ENCODE measurements at regions of chr12 and their contacts with region 1.

Region 1: GRCh38 chr12:93378373-93379325 is 924 bp downstream of the NUDT4 start:
- DNase-seq: peak in 1 of 2 experiments; percentile 19
- H3K4me3 ChIP-seq: peak overlapping the region; percentile 86
- H3K27ac ChIP-seq: peak overlapping the region; percentile 42
- H3K4me1 ChIP-seq: peaks cover 28% of the 10 kb centered on the region
- H3K27me3 ChIP-seq: no peaks in the 10 kb centered on the region
- CTCF ChIP-seq: no peak

Region 2: DNA sequence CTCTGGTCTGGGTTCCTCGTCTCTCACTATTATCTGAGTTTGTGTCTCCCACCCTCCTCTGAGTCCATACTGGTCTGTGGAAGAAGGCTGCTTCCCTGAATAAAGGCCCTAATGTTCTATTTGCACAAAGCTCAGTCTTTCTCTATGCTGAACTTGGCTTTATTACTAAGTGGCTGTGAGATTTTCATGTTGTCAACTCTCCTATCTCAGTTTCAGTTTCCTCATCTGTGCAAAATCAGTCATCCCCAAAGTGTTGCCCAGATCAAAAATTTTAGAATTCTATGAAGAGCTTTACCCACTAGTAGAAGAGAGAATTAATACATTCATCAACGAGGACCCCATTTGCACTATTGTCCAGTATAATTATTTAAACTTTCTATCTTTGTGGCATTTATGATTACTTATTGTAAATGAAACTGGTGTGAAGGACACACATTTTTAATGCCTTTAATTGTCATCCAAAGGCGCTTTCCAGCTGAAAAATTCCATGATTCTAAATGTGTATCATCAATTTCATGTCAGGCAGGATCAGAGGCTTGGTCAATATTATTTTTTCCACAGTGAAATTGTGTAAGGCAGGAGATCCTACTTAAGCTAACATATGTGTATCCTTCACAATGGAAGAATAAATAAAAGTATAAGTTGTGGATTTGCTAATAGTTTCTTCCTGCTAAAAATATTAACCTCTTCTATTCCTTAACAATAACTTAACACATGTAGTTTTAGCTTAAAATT is 370.4 kb before region 1 on chr12:
- CTCF ChIA-PET with region 1: no interaction called
- POLR2A ChIA-PET with region 1: no interaction called
- intact Hi-C with region 1: no loop called
- DNase-seq: no peak
- H3K4me3 ChIP-seq: no peak overlapping the region
- H3K27ac ChIP-seq: no peak overlapping the region
- H3K4me1 ChIP-seq: no peaks in the 10 kb centered on the region
- H3K27me3 ChIP-seq: no peaks in the 10 kb centered on the region
- CTCF ChIP-seq: no peak

Region 3: DNA sequence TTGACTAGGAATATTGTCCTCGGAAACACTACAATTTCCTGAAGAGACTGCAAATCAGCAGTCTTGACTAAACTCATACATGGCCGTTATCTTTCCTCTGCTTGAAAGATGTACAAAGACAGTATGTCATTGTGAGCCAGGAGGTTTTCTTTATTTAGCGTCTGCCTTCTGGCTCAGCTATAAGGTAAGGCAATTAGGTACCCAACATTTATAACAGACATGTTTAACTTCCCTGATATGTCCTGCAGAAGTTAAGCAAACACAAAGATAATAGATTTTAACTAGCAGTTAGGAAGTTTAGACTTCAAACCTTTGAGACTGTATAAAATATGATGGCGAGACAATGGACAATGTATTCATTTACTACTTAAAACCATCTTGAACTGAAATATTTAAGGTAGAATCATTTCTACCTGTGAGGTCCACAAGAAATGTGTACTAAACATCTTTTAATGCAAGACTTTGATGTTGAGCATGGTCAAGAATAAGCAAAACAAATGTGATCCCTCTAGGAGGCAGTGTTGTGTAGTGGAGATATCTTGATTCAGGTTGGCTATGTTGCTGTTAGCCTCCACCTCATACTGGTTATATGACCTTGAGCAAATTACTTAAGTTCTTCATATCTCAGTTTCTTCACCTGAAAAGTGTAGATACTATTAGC is 353.4 kb before region 1 on chr12:
- CTCF ChIA-PET with region 1: no interaction called
- POLR2A ChIA-PET with region 1: no interaction called
- intact Hi-C with region 1: loop called (anchors 1 kb)
- DNase-seq: no peak
- H3K4me3 ChIP-seq: no peak overlapping the region
- H3K27ac ChIP-seq: no peak overlapping the region
- H3K4me1 ChIP-seq: peaks cover 28% of the 10 kb centered on the region
- H3K27me3 ChIP-seq: no peaks in the 10 kb centered on the region
- CTCF ChIP-seq: peak; percentile 53; the same call in 1 of the 2 replicates

Region 4: DNA sequence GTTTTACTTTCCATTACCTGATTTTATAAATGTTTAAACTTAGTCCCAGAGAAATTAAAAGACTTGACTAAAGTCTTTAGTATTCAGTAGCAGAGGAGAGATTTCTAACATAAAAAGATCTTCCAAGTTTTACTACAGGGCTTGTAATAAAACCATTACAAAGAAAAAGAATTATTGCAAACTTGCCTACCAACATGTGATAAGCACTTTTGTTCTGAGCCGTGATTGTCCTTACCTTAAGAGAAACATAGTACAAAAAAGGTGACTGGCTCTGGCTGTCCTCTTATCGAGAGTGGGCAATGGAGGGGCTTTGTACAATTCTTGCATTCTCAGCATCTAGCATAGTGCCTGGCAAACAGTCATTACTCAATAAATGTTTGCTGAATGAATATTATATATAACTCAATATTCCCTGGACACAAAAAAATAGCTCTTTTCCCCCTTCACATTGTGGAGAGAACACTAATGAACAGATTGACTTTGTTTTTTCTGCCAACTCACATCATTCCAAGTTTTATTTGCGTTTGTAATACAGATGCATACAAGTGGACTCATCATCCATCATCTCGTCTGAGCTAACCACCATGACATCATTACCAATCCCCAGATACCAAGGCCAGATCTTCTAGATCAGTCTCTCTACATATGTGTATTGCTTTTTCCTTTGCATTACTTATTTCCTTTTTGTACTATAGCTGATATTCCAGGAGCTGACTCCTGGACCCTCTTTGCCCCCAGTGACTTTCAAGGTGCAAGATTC is 256.7 kb before region 1 on chr12:
- CTCF ChIA-PET with region 1: interaction called, 10 read pairs
- POLR2A ChIA-PET with region 1: no interaction called
- intact Hi-C with region 1: no loop called
- DNase-seq: peak in 1 of 2 experiments; percentile 42
- H3K4me3 ChIP-seq: no peak overlapping the region
- H3K27ac ChIP-seq: peak overlapping the region; percentile 75
- H3K4me1 ChIP-seq: peaks cover 18% of the 10 kb centered on the region
- H3K27me3 ChIP-seq: no peaks in the 10 kb centered on the region
- CTCF ChIP-seq: no peak

Region 5: DNA sequence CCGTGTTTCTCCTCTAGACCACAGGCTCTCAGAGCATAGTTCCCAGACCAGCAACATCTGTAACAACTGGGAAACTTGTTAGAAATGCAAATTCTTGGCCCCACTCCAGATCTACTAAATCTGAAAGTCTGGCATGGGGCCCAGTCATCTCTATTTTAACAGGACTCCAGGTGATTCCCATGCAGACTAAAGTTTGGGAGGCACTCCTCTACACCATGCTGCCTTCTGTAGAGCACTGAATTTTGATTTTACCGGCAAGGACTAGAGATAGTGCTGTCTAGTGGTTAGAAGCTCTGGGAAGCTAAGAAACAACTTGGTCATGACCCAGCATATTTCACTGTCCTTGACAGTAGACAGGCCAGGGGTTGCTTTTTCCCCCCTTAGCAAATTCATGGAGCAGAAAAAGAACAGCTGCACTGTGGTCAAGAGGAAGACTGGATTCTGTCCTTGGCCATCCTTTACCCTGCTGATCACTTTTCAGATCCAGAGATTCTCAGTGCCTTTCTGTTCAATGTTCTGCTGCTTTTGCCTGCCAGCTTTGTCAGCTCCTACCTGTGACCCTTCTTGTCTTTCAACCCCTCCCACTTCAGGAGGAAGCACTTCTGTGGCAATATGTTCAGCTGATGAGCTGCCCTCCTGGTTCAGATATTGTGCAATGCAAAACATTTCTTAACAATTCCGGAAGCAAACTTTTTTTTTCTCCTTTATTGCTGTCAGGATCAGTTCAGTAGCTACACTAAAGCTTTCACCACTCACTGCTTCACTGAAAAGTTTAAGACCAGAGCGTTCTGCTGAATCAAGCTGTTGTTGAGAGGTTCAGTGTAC is 134.7 kb before region 1 on chr12:
- CTCF ChIA-PET with region 1: no interaction called
- POLR2A ChIA-PET with region 1: no interaction called
- intact Hi-C with region 1: loop called (anchors 5 kb)
- DNase-seq: peak; percentile 42 to 84
- H3K4me3 ChIP-seq: no peak overlapping the region
- H3K27ac ChIP-seq: peak overlapping the region; percentile 47
- H3K4me1 ChIP-seq: peaks cover 23% of the 10 kb centered on the region
- H3K27me3 ChIP-seq: no peaks in the 10 kb centered on the region
- CTCF ChIP-seq: no peak

Region 6: GRCh38 chr12:93322784-93323183 is 55.9 kb before region 1 on chr12:
- CTCF ChIA-PET with region 1: no interaction called
- POLR2A ChIA-PET with region 1: interaction called, 14 read pairs
- intact Hi-C with region 1: no loop called
- DNase-seq: no peak
- H3K4me3 ChIP-seq: no peak overlapping the region
- H3K27ac ChIP-seq: no peak overlapping the region
- H3K4me1 ChIP-seq: peaks cover 11% of the 10 kb centered on the region; the same call in 1 of the 2 replicates
- H3K27me3 ChIP-seq: no peaks in the 10 kb centered on the region
- CTCF ChIP-seq: no peak

Region 7: GRCh38 chr12:93361151-93361919 is 17.3 kb before region 1 on chr12:
- CTCF ChIA-PET with region 1: no interaction called
- POLR2A ChIA-PET with region 1: no interaction called
- intact Hi-C with region 1: no loop called
- DNase-seq: no peak
- H3K4me3 ChIP-seq: no peak overlapping the region
- H3K27ac ChIP-seq: no peak overlapping the region
- H3K4me1 ChIP-seq: 0 out of 2 replicates have a peak, but pooled peaks cover 4% of the 10 kb centered on the region
- H3K27me3 ChIP-seq: no peaks in the 10 kb centered on the region
- CTCF ChIP-seq: no peak

Region 8: DNA sequence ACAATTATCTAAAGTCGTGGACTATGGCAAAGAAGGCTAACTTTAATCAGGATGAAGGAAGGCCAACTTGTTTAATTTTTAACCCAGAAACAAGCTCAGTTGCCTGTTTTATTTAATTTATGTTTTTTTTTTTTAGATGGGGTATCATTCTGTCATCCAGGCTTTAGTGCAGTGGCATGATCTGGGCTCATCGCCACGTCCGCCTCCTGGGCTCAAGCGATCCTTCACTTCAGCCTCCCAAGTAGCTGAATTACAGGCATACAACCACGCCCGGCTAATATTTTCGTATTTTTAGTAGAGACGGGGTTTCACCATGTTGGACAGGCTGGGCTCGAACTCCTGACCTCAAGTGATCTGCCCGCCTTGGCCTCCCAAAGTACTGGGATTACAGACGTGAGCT is 18.8 kb after region 1 on chr12:
- CTCF ChIA-PET with region 1: no interaction called
- POLR2A ChIA-PET with region 1: no interaction called
- intact Hi-C with region 1: no loop called
- DNase-seq: no peak
- H3K4me3 ChIP-seq: no peak overlapping the region
- H3K27ac ChIP-seq: no peak overlapping the region
- H3K4me1 ChIP-seq: no peaks in the 10 kb centered on the region
- H3K27me3 ChIP-seq: no peaks in the 10 kb centered on the region
- CTCF ChIP-seq: no peak